K562 (cell line): ENCODE measurements at regions of chr9 and their contacts with region 1.

Region 1: DNA sequence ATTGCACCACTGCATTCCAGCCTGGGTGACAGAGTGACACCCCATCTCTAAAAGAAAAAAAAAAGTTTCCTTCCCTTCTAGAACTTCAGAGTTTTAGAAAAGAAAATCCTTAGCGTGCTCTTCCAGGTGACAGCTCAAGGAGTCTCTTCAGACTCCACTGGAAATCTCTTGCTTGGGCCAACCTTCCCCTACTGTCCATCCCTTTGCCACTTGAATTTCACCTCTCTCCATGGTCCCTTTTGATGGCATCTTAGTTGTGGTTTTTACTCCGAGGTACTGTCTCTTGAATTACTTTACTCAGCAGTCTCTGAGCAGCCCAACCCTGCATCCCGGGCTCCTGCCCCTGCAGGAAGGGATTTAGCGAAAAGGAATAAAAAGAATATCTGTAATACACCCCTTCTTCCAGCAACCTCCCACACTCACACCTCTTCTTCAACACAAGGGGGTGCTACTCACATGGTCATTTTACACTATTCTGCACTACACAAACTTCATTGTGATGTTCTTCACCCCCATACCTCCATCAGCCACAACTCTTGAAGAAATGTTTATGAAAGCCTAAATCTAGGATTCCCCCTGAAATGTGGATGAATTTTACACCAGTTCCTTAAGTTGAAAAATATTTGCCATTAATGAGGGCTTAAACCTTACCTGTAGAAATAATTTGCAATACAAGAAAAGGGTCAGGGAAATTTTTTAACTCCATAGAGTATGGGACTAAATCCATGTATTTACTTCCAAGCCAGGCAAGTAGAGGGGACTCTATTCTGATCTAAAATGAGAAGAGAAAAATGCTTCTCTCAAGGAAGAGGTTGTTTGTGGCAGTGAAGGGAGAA is 25.9 kb downstream of the TPD52L3 start:
- DNase-seq: peak; percentile 43 to 55 (median 46)
- ATAC-seq: peak; percentile 91
- H3K4me3 ChIP-seq: no peak overlapping the region
- H3K27ac ChIP-seq: no peak overlapping the region
- H3K4me1 ChIP-seq: no peaks in the 10 kb centered on the region
- H3K27me3 ChIP-seq: no peaks in the 10 kb centered on the region
- CTCF ChIP-seq: peak; percentile 52 to 66 (median 64); a peak in 5 of 6 replicates
- EP300 ChIP-seq: no peak
- POLR2A ChIP-seq: no peak
- RAD21 ChIP-seq: peak; percentile 55 to 76

Region 2: DNA sequence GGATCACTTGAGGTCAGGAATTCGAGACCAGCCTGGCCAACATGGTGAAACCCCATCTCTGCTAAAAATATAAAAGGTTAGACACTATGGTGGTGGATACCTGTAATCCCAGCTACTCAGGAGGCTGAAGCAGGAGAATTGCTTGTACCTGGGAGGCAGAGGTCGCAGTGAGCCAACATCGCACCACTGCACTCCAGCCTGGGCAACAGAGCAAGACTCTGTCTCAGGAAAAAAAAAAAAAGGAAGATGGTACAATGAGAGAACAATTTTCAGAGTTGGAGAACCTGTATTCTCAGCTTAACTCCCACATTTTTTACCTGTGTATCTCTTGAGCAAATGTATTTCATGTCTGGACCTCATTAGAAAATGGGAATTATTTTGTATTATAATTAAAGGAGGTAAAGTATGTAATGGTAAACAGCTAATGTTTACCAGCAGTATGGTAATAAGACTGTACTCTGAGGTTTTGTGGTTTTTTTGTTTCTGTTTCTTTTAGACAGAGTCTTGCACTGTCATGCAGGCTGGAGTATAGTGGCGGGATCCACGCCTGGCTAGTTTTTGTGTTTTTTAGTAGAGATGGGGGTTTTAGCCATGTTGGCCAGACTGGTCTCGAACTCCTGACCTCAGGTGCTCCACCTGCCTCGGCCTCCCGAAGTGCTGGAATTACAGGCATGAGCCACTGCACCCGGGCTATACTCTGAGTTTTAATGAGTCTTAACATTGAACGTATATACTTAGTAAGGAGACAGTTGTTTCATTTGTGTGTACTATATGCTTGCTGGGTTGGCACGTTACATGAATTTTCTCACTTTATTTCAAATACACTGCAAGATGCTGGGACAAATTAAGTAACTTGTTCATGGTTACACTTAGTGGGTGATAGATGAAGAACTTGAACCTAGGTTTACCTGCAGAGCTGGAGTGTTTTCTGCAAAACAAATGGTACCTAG is 75.1 kb after region 1 on chr9:
- CTCF ChIA-PET with region 1: no interaction called
- POLR2A ChIA-PET with region 1: no interaction called
- in situ Hi-C with region 1: no loop called
- intact Hi-C with region 1: no loop called
- DNase-seq: no peak
- ATAC-seq: peak; percentile 68
- H3K4me3 ChIP-seq: no peak overlapping the region
- H3K27ac ChIP-seq: no peak overlapping the region
- H3K4me1 ChIP-seq: peaks cover 0 to 5% of the 10 kb centered on the region in 2 experiments; a peak in 3 of 5 replicates
- H3K27me3 ChIP-seq: no peaks in the 10 kb centered on the region
- CTCF ChIP-seq: no peak
- EP300 ChIP-seq: no peak
- POLR2A ChIP-seq: no peak
- RAD21 ChIP-seq: no peak

Region 3: GRCh38 chr9:6566409-6567139 is 212.5 kb after region 1 on chr9:
- CTCF ChIA-PET with region 1: interaction called, 8 read pairs
- POLR2A ChIA-PET with region 1: no interaction called
- in situ Hi-C with region 1: loop called (anchors 5 kb)
- intact Hi-C with region 1: loop called (anchors 1 kb)
- DNase-seq: peak in 1 of 4 experiments; percentile 11
- ATAC-seq: peak; percentile 61
- H3K4me3 ChIP-seq: no peak overlapping the region
- H3K27ac ChIP-seq: no peak overlapping the region
- H3K4me1 ChIP-seq: no peaks in the 10 kb centered on the region; a peak in 1 of 5 replicates
- H3K27me3 ChIP-seq: no peaks in the 10 kb centered on the region; a peak in 1 of 5 replicates
- CTCF ChIP-seq: no peak
- EP300 ChIP-seq: no peak
- POLR2A ChIP-seq: no peak
- RAD21 ChIP-seq: no peak; a peak in 1 of 4 replicates

Region 4: GRCh38 chr9:6667633-6668280 is 313.7 kb after region 1 on chr9:
- CTCF ChIA-PET with region 1: interaction called, 3 read pairs
- POLR2A ChIA-PET with region 1: interaction called, 3 read pairs
- in situ Hi-C with region 1: no loop called
- intact Hi-C with region 1: loop called (anchors 1 kb)
- DNase-seq: peak; percentile 15 to 37 (median 24)
- ATAC-seq: peak; percentile 46; the same call in 1 of the 3 replicates
- H3K4me3 ChIP-seq: no peak overlapping the region
- H3K27ac ChIP-seq: no peak overlapping the region
- H3K4me1 ChIP-seq: no peaks in the 10 kb centered on the region; a peak in 2 of 5 replicates
- H3K27me3 ChIP-seq: no peaks in the 10 kb centered on the region
- CTCF ChIP-seq: peak; percentile 35 to 58 (median 36); a peak in 3 of 6 replicates
- EP300 ChIP-seq: no peak
- POLR2A ChIP-seq: no peak
- RAD21 ChIP-seq: peak; percentile 9 to 47; a peak in 2 of 4 replicates

Region 5: DNA sequence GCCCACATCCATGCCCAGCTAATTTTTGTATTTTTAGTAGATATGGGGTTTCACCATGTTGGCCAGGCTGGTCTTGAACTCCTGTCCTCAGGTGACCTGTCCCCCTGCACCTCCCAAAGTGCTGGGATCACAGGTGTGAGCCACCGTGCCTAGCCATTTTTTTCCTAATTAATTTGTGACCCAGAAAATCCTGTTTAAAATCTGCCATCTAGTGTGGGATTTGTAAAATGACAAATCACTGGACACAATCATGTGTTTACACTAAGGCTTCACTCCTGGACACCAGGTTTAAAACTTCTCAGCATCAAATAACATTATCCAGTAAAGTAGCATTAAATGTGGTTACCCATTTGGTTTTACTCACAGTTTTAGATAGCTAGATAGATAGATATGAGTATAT is 385.1 kb after region 1 on chr9:
- CTCF ChIA-PET with region 1: interaction called, 9 read pairs
- POLR2A ChIA-PET with region 1: no interaction called
- in situ Hi-C with region 1: no loop called
- intact Hi-C with region 1: loop called (anchors 5 kb)
- DNase-seq: peak in 1 of 4 experiments; percentile 17
- ATAC-seq: peak; percentile 39; the same call in 1 of the 3 replicates
- H3K4me3 ChIP-seq: no peak overlapping the region
- H3K27ac ChIP-seq: no peak overlapping the region
- H3K4me1 ChIP-seq: no peaks in the 10 kb centered on the region
- H3K27me3 ChIP-seq: no peaks in the 10 kb centered on the region
- CTCF ChIP-seq: peak in 2 of 3 experiments; percentile 12 to 50; a peak in 3 of 6 replicates
- EP300 ChIP-seq: no peak
- POLR2A ChIP-seq: no peak
- RAD21 ChIP-seq: peak; percentile 36 to 58; a peak in 3 of 4 replicates